ENCODE measurements at regions of chr4 and their contacts with region 1.

Region 1: GRCh38 chr4:82268050-82268825 is 105.6 kb downstream of the HNRNPD start:
- DNase-seq: peak in 8 of 9 experiments; percentile 15 to 71 (median 46)
- ATAC-seq: peak; percentile 94
- H3K4me3 ChIP-seq: no peak overlapping the region
- H3K4me3 Mint-ChIP-seq: no peak overlapping the region
- H3K27ac ChIP-seq: no peak overlapping the region
- H3K27ac Mint-ChIP-seq: no peak overlapping the region
- H3K4me1 ChIP-seq: peaks cover 11% of the 10 kb centered on the region
- H3K4me1 Mint-ChIP-seq: peaks cover 16% of the 10 kb centered on the region
- H3K27me3 ChIP-seq: no peaks in the 10 kb centered on the region
- H3K27me3 Mint-ChIP-seq: peaks cover 6% of the 10 kb centered on the region
- CTCF ChIP-seq: peak; percentile 79

Region 2: DNA sequence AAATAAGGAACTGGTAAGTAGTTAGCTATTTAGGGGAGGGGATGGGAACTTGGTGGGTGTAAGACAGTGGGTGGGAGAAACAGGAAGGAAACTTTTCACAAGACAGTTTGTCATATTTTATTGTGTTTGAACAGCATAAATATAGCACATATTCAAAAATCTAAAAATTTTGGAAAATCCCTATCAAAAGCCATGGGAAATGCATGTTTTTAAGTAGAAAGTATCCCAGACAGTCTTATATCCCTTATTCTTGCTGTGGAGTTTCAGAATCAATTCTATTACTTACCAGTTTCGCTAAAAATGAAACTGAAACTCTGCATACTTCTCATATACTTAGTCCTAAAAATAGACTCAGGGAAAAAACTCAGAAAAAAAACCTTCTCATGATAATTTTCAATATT is 774.2 kb before region 1 on chr4:
- CTCF ChIA-PET with region 1: no interaction called
- POLR2A ChIA-PET with region 1: no interaction called
- intact Hi-C with region 1: no loop called
- DNase-seq: peak in 2 of 9 experiments; percentile 46 to 71
- ATAC-seq: peak; percentile 16
- H3K4me3 ChIP-seq: peak overlapping the region; percentile 12 to 32
- H3K4me3 Mint-ChIP-seq: peak overlapping the region; percentile 78
- H3K27ac ChIP-seq: peak overlapping the region; percentile 7 to 71
- H3K27ac Mint-ChIP-seq: peak overlapping the region; percentile 93
- H3K4me1 ChIP-seq: peaks cover 40% of the 10 kb centered on the region
- H3K4me1 Mint-ChIP-seq: peaks cover 50% of the 10 kb centered on the region
- H3K27me3 ChIP-seq: no peaks in the 10 kb centered on the region
- H3K27me3 Mint-ChIP-seq: no peaks in the 10 kb centered on the region
- CTCF ChIP-seq: no peak

Region 3: DNA sequence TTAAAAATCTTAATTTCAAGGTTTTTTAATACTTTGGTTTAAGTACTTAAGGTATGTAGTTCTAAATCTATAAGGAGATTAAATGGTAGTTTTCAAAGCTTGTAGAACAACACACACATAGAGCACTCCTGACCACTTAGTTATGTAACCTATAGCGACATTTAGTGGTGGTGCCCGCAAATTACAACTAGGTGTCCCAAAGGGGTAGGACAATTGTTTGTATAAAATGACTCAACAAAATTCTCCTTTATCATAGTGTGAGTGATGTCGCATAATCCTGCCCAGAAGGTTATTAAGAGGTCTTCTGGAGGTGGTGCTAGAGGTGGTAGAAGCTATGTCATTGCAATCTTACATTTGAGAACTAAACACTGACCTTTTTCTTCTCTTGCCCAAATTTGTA is 423.5 kb before region 1 on chr4:
- CTCF ChIA-PET with region 1: interaction called, 7 read pairs
- POLR2A ChIA-PET with region 1: no interaction called
- intact Hi-C with region 1: loop called (anchors 1 to 10 kb)
- DNase-seq: peak; percentile 27 to 81 (median 73)
- ATAC-seq: peak; percentile 96
- H3K4me3 ChIP-seq: no peak overlapping the region
- H3K4me3 Mint-ChIP-seq: no peak overlapping the region
- H3K27ac ChIP-seq: no peak overlapping the region
- H3K27ac Mint-ChIP-seq: no peak overlapping the region
- H3K4me1 ChIP-seq: no peaks in the 10 kb centered on the region
- H3K4me1 Mint-ChIP-seq: no peaks in the 10 kb centered on the region
- H3K27me3 ChIP-seq: no peaks in the 10 kb centered on the region
- H3K27me3 Mint-ChIP-seq: no peaks in the 10 kb centered on the region
- CTCF ChIP-seq: peak; percentile 79

Region 4: DNA sequence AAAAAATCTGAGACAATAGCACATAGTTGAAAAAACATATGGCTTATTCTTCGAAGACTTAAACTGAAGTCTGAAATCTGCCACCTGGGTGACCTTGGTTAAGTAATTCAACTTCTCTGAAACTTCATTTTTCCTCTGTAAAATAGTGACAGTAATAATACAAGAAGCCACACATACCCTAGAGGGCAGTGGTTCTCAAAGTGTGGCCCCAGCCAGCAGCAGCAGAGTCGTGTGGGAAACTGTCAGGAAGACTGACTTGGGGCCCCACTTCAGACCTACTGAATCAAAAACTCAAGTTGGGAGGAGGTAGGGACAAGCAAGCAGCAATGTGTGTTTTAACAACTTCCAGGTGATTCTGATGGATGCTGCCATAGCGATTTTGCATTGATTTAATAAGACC is 144.3 kb before region 1 on chr4:
- CTCF ChIA-PET with region 1: interaction called, 25 read pairs
- POLR2A ChIA-PET with region 1: no interaction called
- intact Hi-C with region 1: loop called (anchors 1 to 5 kb)
- DNase-seq: peak in 3 of 9 experiments; percentile 32 to 43 (median 38)
- ATAC-seq: peak; percentile 54
- H3K4me3 ChIP-seq: no peak overlapping the region
- H3K4me3 Mint-ChIP-seq: no peak overlapping the region
- H3K27ac ChIP-seq: no peak overlapping the region
- H3K27ac Mint-ChIP-seq: no peak overlapping the region
- H3K4me1 ChIP-seq: no peaks in the 10 kb centered on the region
- H3K4me1 Mint-ChIP-seq: peaks cover 6% of the 10 kb centered on the region
- H3K27me3 ChIP-seq: no peaks in the 10 kb centered on the region
- H3K27me3 Mint-ChIP-seq: no peaks in the 10 kb centered on the region
- CTCF ChIP-seq: no peak

Region 5: DNA sequence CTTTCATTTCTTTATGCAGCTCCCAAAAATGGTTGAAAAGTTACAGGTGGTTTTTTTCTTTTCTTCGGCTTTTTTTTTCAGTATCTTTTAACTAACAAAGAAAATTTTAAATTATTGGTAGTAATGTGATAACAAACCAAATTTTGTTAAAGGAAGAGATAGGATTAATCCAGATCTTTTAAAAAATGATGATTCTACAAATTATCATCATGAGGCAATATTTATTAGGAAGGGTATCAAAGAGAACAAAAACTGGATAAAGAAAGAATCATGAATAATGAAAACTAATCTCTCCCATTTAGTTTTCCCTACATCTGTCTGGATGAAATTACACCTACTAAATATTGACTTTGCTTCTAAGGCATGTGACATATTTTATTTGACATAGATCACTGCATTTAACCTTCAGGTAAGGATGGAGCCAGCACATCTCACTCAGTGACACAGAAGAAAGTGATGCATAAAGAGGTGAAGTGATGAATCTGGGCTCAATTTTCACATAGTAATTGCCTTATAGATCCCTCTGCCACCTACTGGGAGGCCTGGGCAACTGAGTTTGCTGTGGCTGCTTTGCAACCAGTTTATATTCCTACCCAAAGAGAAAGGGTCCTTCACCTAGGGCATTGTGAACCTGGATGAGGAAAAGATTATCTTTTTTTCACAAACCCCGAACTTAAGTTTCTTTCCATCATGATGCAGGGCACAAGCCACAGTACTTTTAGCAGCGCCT is 50.1 kb before region 1 on chr4:
- CTCF ChIA-PET with region 1: interaction called, 7 read pairs
- POLR2A ChIA-PET with region 1: no interaction called
- intact Hi-C with region 1: loop called in 1 of 2 experiments (anchors 5 kb)
- DNase-seq: peak in 3 of 9 experiments; percentile 8 to 33 (median 18)
- ATAC-seq: no peak
- H3K4me3 ChIP-seq: no peak overlapping the region
- H3K4me3 Mint-ChIP-seq: no peak overlapping the region
- H3K27ac ChIP-seq: no peak overlapping the region
- H3K27ac Mint-ChIP-seq: no peak overlapping the region
- H3K4me1 ChIP-seq: peaks cover 13% of the 10 kb centered on the region
- H3K4me1 Mint-ChIP-seq: peaks cover 27% of the 10 kb centered on the region
- H3K27me3 ChIP-seq: no peaks in the 10 kb centered on the region
- H3K27me3 Mint-ChIP-seq: no peaks in the 10 kb centered on the region
- CTCF ChIP-seq: no peak

Measured in CD8-positive, alpha-beta T cell (primary cell).